PC-3 (cell line): ENCODE measurements at regions of chr5 and their contacts with region 1.

Region 1: GRCh38 chr5:98109561-98110006 is 663.9 kb upstream of the RGMB start:
- DNase-seq: peak; percentile 93
- ATAC-seq: peak; percentile 69
- H3K4me3 ChIP-seq: peak overlapping the region; percentile 21; the same call in 1 of the 2 replicates
- H3K27ac ChIP-seq: peak overlapping the region; percentile 97
- H3K4me1 ChIP-seq: peaks cover 49% of the 10 kb centered on the region
- H3K27me3 ChIP-seq: no peaks in the 10 kb centered on the region
- CTCF ChIP-seq: no peak

Region 2: GRCh38 chr5:96763026-96763425 is 1346.6 kb before region 1 on chr5:
- CTCF ChIA-PET with region 1: no interaction called
- POLR2A ChIA-PET with region 1: no interaction called
- intact Hi-C with region 1: loop called (anchors 5 kb)
- DNase-seq: no peak
- ATAC-seq: no peak
- H3K4me3 ChIP-seq: no peak overlapping the region
- H3K27ac ChIP-seq: no peak overlapping the region
- H3K4me1 ChIP-seq: peaks cover 25% of the 10 kb centered on the region
- H3K27me3 ChIP-seq: no peaks in the 10 kb centered on the region
- CTCF ChIP-seq: no peak

Region 3: DNA sequence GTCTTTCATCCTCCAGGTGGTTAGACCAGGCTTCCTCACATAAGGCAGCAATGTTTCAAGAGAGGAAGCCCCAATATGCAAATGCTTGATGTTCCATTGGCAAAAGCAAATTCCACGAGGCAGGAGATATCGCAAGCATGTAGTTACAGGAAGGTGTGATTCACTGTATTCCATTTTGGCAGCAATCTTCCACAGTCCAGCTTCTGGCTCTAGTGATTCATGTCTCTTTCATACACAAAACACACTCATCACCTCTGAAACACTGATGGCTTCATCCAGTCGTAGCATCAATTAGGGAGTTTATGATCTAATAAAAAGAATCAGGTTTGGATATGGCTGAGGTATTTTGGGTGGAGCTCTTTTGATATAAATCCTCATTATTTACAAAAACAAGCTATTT is 374.4 kb before region 1 on chr5:
- CTCF ChIA-PET with region 1: no interaction called
- POLR2A ChIA-PET with region 1: no interaction called
- intact Hi-C with region 1: loop called (anchors 5 kb)
- DNase-seq: peak; percentile 85
- ATAC-seq: peak; percentile 95
- H3K4me3 ChIP-seq: no peak overlapping the region
- H3K27ac ChIP-seq: peak overlapping the region; percentile 28
- H3K4me1 ChIP-seq: peaks cover 11% of the 10 kb centered on the region
- H3K27me3 ChIP-seq: no peaks in the 10 kb centered on the region
- CTCF ChIP-seq: no peak

Region 4: GRCh38 chr5:97986069-97986468 is 123.5 kb before region 1 on chr5:
- CTCF ChIA-PET with region 1: no interaction called
- POLR2A ChIA-PET with region 1: no interaction called
- intact Hi-C with region 1: no loop called
- DNase-seq: peak; percentile 85
- ATAC-seq: peak; percentile 87
- H3K4me3 ChIP-seq: no peak overlapping the region
- H3K27ac ChIP-seq: peak overlapping the region; percentile 16
- H3K4me1 ChIP-seq: peaks cover 10% of the 10 kb centered on the region; the same call in 1 of the 2 replicates
- H3K27me3 ChIP-seq: no peaks in the 10 kb centered on the region
- CTCF ChIP-seq: peak; percentile 68

Region 5: DNA sequence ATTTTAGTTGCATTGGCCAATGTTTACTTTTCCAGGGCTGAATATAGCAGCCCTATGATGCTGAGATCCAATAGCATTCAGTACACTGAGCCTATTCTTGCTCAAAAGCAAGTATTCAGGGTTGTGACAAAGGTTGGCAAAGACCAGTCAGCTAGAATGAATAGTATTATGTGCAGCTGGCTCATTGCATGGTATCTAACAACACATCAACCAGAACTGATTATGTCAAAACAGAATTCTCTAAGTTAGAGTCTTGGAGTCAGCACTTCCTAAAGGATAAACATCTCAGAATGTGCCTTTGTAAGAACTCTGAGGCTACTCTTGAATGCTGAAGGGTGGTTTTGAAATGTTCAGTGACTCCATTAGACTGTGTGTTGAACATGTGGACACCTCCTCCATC is 110.6 kb before region 1 on chr5:
- CTCF ChIA-PET with region 1: no interaction called
- POLR2A ChIA-PET with region 1: no interaction called
- intact Hi-C with region 1: no loop called
- DNase-seq: no peak
- ATAC-seq: no peak
- H3K4me3 ChIP-seq: no peak overlapping the region
- H3K27ac ChIP-seq: no peak overlapping the region
- H3K4me1 ChIP-seq: no peaks in the 10 kb centered on the region
- H3K27me3 ChIP-seq: no peaks in the 10 kb centered on the region
- CTCF ChIP-seq: no peak

Region 6: GRCh38 chr5:98193921-98194760 is 84.6 kb after region 1 on chr5:
- CTCF ChIA-PET with region 1: no interaction called
- POLR2A ChIA-PET with region 1: no interaction called
- intact Hi-C with region 1: loop called (anchors 2 kb)
- DNase-seq: peak; percentile 90
- ATAC-seq: peak; percentile 96
- H3K4me3 ChIP-seq: no peak overlapping the region
- H3K27ac ChIP-seq: peak overlapping the region; percentile 41
- H3K4me1 ChIP-seq: peaks cover 17% of the 10 kb centered on the region
- H3K27me3 ChIP-seq: no peaks in the 10 kb centered on the region
- CTCF ChIP-seq: no peak

Region 7: GRCh38 chr5:98309785-98310598 is 200.4 kb after region 1 on chr5:
- CTCF ChIA-PET with region 1: no interaction called
- POLR2A ChIA-PET with region 1: no interaction called
- intact Hi-C with region 1: loop called (anchors 2 kb)
- DNase-seq: peak; percentile 99
- ATAC-seq: peak; percentile 90
- H3K4me3 ChIP-seq: peak overlapping the region; percentile 52; the same call in 1 of the 2 replicates
- H3K27ac ChIP-seq: peak overlapping the region; percentile 95
- H3K4me1 ChIP-seq: peaks cover 68% of the 10 kb centered on the region
- H3K27me3 ChIP-seq: no peaks in the 10 kb centered on the region
- CTCF ChIP-seq: no peak